ENCODE measurements at regions of chr11 and their contacts with region 1.

Region 1: DNA sequence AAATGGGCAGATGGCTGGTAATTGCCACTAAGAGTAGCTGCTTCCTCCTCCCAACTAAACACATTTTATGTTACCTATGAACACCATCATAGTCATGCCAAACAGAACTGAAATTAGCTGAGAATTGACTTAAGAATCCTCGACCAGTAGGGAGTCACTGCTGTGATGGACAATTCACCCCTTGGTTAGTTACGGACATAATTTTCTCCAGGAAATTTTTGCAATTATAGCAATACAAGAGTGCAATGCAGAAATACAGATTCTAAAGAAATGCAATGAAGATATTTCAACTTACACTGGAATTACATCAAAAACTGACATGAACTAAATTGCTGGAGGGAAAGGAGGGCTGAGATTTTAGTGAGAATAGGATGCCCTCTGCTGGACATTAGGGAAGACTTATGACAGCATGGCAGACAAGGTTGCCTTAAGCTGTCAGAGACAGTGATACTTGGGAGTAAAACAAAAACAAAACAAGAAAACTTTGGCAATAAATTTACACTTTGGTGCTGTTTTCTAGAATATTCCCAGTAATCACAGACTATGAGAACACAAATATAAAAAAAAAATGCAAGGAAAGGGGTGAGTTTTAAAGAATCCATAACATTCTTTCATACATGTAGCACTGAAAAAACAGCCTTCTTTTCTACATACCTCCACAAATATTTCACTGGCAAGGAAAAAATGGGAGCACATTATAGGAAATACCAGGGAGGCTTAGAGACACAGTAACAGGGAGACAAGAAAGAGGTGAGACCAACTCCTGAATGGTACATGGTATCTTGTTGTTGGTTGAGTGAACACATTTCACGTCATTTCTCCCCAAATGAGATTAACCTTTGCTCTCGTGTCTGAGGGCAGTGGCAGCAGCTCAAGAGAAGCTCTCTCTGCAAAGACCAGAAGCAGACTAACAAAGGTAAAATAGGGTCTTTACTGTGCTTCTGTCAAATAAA is 11.2 kb upstream of the PPP2R1B start:
- DNase-seq: no peak

Region 2: GRCh38 chr11:111601979-111602864 is 175.1 kb before region 1 on chr11 and contains the start of gene SIK2:
- intact Hi-C with region 1: loop called (anchors 5 kb)
- DNase-seq: peak; percentile 98
- total RNA-seq, gene SIK2: 22.7 to 26.1 TPM

Region 3: GRCh38 chr11:111718436-111718835 is 58.9 kb before region 1 on chr11:
- intact Hi-C with region 1: no loop called
- DNase-seq: no peak

Region 4: DNA sequence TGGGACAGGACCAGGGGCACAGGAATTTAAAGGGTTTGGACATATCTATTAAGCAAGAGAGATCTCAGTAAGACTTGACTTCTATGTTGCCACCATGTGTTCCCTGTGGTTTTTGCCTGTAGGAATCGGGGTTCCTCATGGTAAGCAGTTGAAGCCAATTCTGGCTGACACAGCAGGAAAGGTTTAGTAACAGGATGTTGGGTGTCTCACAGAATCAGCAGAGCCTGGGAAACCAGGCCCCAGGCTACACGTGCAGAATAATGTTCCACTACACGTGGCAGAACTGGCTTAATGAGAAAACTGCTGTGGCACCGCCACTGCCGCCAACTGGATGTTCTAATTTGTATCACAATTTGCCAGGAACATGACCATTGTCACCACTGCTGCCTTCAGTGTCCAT is 747.9 kb after region 1 on chr11:
- intact Hi-C with region 1: no loop called
- DNase-seq: no peak

Measured in posterior vena cava (tissue), 2 donors.